ENCODE measurements at regions of chr17 and their contacts with region 1.

Region 1: DNA sequence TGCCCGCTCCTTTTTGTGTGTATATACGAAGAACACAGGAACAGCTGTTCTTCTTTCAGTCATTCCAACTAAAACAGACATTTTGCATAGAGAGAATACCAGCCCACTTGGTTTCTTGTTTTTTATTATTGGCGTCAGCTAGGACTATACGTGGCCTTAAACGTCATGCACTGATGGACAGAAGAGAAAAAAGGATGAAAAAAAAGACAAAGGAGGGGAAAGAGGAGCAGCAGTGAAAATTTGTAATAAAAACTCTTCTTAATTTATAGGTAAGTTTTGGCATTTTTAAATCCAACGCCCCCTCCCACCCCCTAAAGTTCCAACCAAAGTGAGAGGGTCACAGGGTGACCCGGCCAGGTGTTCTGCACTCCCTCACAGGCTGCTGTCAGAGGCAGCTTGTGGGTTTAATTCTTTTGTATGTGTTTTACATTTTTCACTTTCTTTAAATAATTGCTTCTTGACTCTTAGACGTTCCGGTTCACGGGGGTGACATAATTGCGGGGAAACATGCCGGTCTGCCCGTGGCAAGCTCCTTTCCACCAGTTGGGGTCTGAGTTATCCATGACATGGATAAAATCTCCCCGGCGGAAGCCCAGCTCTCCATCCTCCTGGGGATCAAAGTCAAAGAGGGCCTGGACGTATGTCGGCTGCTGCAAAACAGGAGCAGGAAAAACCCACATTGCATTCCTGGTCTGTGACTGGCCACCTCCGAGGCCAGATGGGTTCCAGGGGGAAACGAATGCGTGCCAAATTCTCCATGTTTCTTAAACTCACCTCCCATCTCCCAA is 30.9 kb upstream of the SLC25A19 start:
- DNase-seq: no peak

Region 2: DNA sequence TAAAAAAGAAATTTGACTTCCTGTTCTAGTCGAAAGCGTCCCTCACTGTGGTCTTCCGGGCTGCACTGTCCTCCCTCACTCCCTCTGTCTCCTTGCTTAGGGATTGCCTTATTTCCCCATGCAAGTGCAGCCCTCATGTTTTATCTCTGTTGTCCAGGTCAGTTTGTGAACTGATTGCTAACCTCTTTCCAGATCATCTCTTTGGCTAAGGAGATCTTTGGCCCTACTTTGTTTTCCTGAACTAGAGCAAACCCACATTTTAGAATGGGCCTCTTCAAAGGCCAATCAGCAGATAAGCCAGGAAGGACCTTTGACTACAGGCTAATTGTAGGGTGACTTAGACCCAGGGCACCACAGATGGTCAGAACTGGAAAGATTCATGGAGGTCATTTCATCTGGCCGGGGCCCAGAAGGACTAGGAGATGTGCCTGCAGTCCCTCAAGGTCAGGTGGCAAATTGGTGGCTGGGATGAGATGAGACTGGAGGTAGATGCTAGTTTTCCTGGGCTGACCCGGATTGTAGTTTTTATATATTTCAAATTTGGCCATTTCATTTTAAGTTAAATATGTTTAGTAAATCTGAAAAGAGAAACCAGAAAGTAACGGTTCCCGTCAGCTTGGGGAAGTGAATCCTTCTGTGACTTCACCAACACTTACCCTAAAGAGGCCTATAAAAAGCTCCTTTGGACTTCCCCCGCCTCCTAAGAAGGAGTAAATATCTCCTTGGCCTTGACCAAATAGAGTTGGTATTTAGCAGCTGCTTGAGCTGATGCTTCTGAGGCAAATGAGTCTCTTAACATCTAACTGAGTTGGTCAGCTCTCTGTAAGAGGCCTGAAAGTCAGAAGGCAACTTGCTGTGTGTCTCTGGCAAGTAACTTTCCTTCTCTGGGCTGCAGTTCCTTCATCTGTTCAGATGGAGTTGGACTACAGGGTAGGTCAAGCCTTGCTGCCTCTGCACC is 24.6 kb before region 1 on chr17:
- intact Hi-C with region 1: loop called (anchors 2 kb)
- DNase-seq: no peak

Region 3: GRCh38 chr17:75352079-75352569 is 32.0 kb after region 1 on chr17:
- intact Hi-C with region 1: no loop called
- DNase-seq: no peak

Region 4: DNA sequence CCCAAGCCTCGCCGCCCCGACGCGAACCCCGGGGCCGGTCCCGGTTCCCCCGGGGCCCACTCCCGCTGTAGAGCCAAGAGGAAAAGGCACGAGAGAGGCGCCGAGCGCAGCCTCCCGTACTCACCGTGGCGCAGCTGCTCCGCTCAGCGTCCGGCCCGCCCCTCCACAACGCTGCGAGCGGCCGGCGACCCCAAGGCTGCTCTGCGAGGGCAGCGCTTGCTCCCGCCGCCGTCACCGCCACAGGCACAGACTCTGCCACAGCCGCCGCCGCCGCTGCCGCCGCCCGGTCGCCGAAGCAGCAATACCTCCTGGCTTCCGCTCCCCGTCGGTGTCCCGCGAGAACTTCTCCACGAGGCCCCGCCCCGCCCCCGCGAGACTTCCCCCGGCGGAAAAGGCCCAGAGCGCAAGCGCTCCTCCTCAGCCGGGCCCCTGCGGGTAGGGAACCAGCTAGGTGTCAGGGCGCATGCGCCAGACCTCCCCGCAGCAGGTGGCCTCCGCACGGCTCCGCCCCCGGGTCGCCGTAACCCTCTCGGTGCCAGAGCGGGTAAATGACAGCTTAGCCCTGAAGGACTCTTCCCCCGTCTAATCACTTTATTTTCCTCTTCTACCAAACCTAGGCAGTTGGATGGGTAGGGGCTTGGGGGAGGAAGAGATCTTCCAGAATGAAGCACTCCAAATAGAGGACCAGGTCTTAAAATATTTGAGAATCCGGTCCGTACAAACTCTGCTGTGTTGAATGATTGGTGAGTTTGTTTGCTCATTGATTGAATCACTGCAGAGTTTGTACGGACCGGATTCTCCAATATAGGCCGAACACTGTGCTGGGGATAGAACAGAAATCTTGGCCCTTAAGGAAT is 85.5 kb after region 1 on chr17 and contains the start of gene GRB2:
- intact Hi-C with region 1: loop called (anchors 1 kb)
- DNase-seq: peak; percentile 100
- total RNA-seq, gene GRB2: 57.1 TPM